ENCODE measurements at regions of chr11 and their contacts with region 1.

Region 1: GRCh38 chr11:2151500-2152257 is 9.3 kb downstream of the INS start:
- DNase-seq: peak; percentile 90

Region 2: GRCh38 chr11:560305-561147 is 1591.2 kb before region 1 on chr11 and contains the starts of genes LMNTD2 and RASSF7:
- intact Hi-C with region 1: loop called in 1 of 2 experiments (anchors 5 kb)
- DNase-seq: peak; percentile 96
- total RNA-seq, gene LMNTD2: 0.43 to 0.56 TPM
- total RNA-seq, gene RASSF7: 2.1 to 2.6 TPM

Region 3: GRCh38 chr11:1694064-1694845 is 457.4 kb before region 1 on chr11:
- intact Hi-C with region 1: loop called (anchors 5 kb)
- DNase-seq: peak; percentile 97

Region 4: GRCh38 chr11:1837171-1838076 is 314.3 kb before region 1 on chr11:
- intact Hi-C with region 1: loop called (anchors 5 kb)
- DNase-seq: no peak

Region 5: GRCh38 chr11:1882519-1883238 is 269.0 kb before region 1 on chr11:
- intact Hi-C with region 1: loop called (anchors 5 to 10 kb)
- DNase-seq: peak; percentile 95

Region 6: GRCh38 chr11:2077061-2077802 is 74.4 kb before region 1 on chr11:
- intact Hi-C with region 1: no loop called
- DNase-seq: no peak